Panc1 (cell line): ENCODE measurements at regions of chr3 and their contacts with region 1.

Region 1: DNA sequence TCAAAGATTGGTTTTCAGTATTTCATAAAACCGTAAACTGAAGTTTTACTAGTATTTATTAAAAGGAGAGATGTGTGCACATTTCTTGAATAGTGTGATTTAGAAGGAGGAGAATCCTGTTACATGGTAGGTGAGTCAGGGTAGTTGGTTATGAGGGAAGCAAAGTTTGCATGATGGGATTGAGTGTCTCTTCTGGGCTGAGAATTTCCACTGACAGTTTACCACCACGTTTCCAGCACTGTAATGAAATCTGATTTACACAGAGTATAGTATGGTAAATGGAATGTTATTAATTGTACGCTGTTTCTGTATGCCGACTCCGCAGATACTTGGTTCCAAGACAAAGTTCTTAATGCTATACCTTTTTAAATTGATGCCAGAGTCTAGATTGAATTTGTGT is 1.6 kb downstream of the NECTIN3 start:
- DNase-seq: no peak
- ATAC-seq: no peak
- H3K4me3 ChIP-seq: peak overlapping the region; percentile 55 to 71; a peak in 3 of 4 replicates
- H3K27ac ChIP-seq: no peak overlapping the region
- H3K4me1 ChIP-seq: peaks cover 10% of the 10 kb centered on the region
- H3K27me3 ChIP-seq: peaks cover 14% of the 10 kb centered on the region; the same call in 1 of the 2 replicates
- CTCF ChIP-seq: no peak

Region 2: DNA sequence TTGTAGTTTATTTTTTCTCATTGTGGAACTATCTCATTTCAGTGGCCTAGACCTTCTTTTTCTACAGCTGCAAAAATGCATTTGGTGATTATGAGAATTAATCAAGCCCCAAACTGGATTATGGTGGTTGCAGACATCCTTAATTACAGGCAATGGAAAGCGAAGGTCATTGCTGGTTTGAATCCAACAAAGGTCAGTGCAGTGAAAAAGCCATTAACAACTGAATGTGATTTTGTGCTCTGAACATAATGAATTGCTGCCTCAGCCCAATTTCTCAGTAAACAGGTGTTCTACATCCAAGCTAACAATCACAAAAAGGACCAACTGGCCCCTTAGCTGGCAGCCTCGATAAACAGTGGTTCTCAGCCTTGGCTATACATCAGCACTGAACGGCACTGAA is 1475.8 kb before region 1 on chr3:
- CTCF ChIA-PET with region 1: no interaction called
- POLR2A ChIA-PET with region 1: interaction called, 10 read pairs
- in situ Hi-C with region 1: no loop called
- intact Hi-C with region 1: no loop called
- DNase-seq: no peak
- ATAC-seq: no peak
- H3K4me3 ChIP-seq: no peak overlapping the region
- H3K27ac ChIP-seq: no peak overlapping the region
- H3K4me1 ChIP-seq: no peaks in the 10 kb centered on the region
- H3K27me3 ChIP-seq: no peaks in the 10 kb centered on the region
- CTCF ChIP-seq: no peak